Activated CD8-positive, alpha-beta T cell treated with anti-CD3 and anti-CD28 coated beads for 36 hours (primary cell): ENCODE measurements at regions of chr2 and their contacts with region 1.

Region 1: GRCh38 chr2:187842978-187843847 is 289.0 kb upstream of the TFPI start:
- DNase-seq: no peak
- ATAC-seq: no peak
- H3K4me3 Mint-ChIP-seq: no peak overlapping the region
- H3K27ac Mint-ChIP-seq: no peak overlapping the region
- H3K4me1 Mint-ChIP-seq: no peaks in the 10 kb centered on the region
- H3K27me3 Mint-ChIP-seq: no peaks in the 10 kb centered on the region
- CTCF ChIP-seq: peak; percentile 62

Region 2: DNA sequence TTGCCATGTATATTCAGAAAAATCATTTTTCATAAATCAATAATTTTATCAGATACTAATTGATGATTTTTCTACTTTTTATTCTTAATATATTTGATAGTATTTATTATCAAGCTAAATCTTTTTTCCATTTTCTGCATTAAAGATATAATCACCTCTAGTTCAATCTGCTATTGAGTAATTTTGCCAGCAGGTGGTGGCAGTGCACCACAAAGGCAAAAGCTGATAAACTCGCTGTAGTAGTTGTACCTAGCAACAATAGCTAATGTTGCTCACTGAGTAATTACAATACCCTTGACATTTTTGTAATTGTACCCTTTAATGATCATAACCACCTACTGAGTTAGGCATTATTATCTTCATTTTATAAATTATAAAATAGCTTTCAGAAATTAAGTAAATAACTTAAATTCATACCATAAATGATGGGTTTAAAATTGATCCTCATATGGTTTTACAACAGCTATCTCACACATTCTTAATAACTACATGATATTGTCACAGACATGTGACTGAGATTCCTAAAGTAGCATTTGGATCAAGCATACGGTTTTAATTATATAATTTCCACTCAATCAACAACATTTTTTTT is 343.2 kb before region 1 on chr2:
- CTCF ChIA-PET with region 1: interaction called, 15 read pairs
- POLR2A ChIA-PET with region 1: no interaction called
- intact Hi-C with region 1: loop called (anchors 5 kb)
- DNase-seq: peak; percentile 72
- ATAC-seq: peak; percentile 73
- H3K4me3 Mint-ChIP-seq: no peak overlapping the region
- H3K27ac Mint-ChIP-seq: no peak overlapping the region
- H3K4me1 Mint-ChIP-seq: no peaks in the 10 kb centered on the region
- H3K27me3 Mint-ChIP-seq: peaks cover 1% of the 10 kb centered on the region
- CTCF ChIP-seq: peak; percentile 84